Spleen (tissue), 13 donors: ENCODE measurements at regions of chr2 and their contacts with region 1.

Region 1: DNA sequence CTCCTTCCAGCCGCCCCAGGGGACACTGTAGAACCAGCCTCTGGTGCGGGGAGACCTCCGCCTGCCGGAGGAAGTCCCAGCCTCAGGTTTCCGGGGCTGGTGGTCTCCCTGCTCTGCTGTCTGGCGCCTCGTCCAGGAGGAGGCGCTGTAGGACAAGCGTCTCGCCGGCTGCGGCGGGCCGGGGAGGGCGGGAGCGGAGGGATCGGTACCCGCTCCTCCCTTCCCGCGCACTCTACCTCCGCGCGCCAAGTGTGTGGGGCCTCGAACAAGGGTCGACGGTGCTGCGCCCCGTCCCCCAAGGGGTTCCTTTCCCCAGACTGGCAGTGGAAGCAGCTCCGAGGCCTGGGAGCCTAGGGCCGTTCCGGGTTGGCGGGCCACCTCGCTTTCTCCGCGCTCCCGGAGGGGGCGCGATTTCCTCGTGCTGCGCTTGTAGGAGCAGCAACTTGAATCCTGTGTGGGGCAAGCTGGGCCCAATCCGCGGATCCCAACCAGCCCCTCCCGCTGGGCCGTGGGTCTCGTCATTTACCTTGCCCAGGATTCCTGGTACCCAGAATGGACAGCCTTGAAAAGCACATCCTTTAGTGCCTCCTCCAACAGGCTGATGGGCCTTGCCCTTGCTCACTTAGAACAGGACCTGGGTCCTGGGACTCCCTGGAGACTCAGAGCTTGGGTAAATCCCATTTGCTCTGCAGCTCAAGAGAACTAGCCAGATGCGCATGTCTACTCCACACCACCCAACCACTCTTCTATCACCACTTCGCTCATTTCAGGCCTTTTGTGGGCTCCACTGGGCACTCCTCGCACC is 10.6 kb upstream of the HOXD4 start:
- DNase-seq: peak; percentile 90
- H3K4me3 ChIP-seq: peak overlapping the region; percentile 22 to 67 (median 38)
- H3K27ac ChIP-seq: peak overlapping the region in 7 of 8 donors; percentile 73 to 93 (median 86)
- H3K4me1 ChIP-seq: peaks cover 7 to 42% (median 31%) of the 10 kb centered on the region in 6 donors
- H3K27me3 ChIP-seq: peaks cover 0 to 100% (median 63%) of the 10 kb centered on the region in 7 donors
- CTCF ChIP-seq: peak; percentile 73 to 95 (median 84)
- POLR2A ChIP-seq: no peak

Region 2: DNA sequence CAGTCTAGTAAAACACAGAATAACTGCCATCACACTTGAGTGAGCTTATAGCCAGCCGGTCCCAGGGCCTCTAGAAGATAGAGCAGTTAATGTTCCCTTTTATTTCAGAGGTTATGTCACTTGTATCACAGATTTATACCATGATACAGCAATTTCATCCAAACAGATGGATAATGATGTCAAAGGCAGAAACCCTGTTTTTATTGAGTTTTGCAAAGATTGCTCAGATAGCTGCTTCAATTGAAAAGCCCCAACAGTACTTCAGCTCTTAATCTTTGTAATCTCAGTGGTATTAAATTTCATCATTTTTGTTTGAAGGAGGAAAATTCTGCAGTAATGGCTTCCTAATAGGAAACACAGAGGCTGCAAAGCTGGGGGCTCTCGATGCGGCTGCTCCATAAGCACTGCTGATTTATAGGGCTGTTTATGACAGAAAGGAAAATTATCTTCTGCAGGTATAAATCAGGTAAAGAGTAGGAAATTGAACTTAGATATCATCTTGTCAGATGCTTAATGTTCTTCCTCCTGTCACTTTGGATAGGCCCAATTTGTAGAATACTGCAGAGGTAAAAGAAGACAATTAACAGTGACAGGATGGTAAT is 250.9 kb before region 1 on chr2:
- intact Hi-C with region 1: no loop called
- DNase-seq: no peak
- H3K4me3 ChIP-seq: no peak overlapping the region
- H3K27ac ChIP-seq: no peak overlapping the region
- H3K4me1 ChIP-seq: no peaks in the 10 kb centered on the region
- H3K27me3 ChIP-seq: peaks cover 0 to 14% (median 0%) of the 10 kb centered on the region in 7 donors
- CTCF ChIP-seq: no peak
- POLR2A ChIP-seq: no peak

Region 3: GRCh38 chr2:176356251-176356650 is 215.5 kb after region 1 on chr2:
- intact Hi-C with region 1: no loop called
- DNase-seq: no peak
- H3K4me3 ChIP-seq: peak overlapping the region in 1 of 8 donors; percentile 1
- H3K27ac ChIP-seq: no peak overlapping the region
- H3K4me1 ChIP-seq: no peaks in the 10 kb centered on the region
- H3K27me3 ChIP-seq: no peaks in the 10 kb centered on the region
- CTCF ChIP-seq: no peak
- POLR2A ChIP-seq: no peak

Region 4: GRCh38 chr2:176454893-176455811 is 314.4 kb after region 1 on chr2:
- intact Hi-C with region 1: loop called (anchors 2 kb)
- DNase-seq: peak; percentile 89
- H3K4me3 ChIP-seq: no peak overlapping the region
- H3K27ac ChIP-seq: no peak overlapping the region
- H3K4me1 ChIP-seq: peaks cover 0 to 12% (median 6%) of the 10 kb centered on the region in 6 donors
- H3K27me3 ChIP-seq: peaks cover 0 to 27% (median 0%) of the 10 kb centered on the region in 7 donors
- CTCF ChIP-seq: peak; percentile 59 to 93 (median 83)
- POLR2A ChIP-seq: no peak

Region 5: GRCh38 chr2:176554101-176555048 is 413.7 kb after region 1 on chr2:
- intact Hi-C with region 1: loop called (anchors 5 kb)
- DNase-seq: no peak
- H3K4me3 ChIP-seq: peak overlapping the region; percentile 30 to 68 (median 37)
- H3K27ac ChIP-seq: peak overlapping the region; percentile 4 to 83 (median 76)
- H3K4me1 ChIP-seq: peaks cover 0 to 19% (median 11%) of the 10 kb centered on the region in 6 donors
- H3K27me3 ChIP-seq: peaks cover 0 to 71% (median 7%) of the 10 kb centered on the region in 7 donors
- CTCF ChIP-seq: peak; percentile 38 to 88 (median 67)
- POLR2A ChIP-seq: no peak